ENCODE measurements at regions of chr11 and their contacts with region 1.

Region 1: GRCh38 chr11:7513234-7514098 is at the start of gene PPFIBP2:
- DNase-seq: peak; percentile 67 to 91 (median 82)
- ATAC-seq: peak; percentile 84
- H3K4me3 ChIP-seq: peak within 1 kb of the TSS; percentile 93 to 96
- H3K4me3 Mint-ChIP-seq: peak within 1 kb of the TSS; percentile 96
- H3K27ac ChIP-seq: peak within 1 kb of the TSS; percentile 84 to 97
- H3K27ac Mint-ChIP-seq: peak within 1 kb of the TSS; percentile 96
- H3K4me1 ChIP-seq: peaks cover 43% of the 10 kb centered on the region
- H3K4me1 Mint-ChIP-seq: peaks cover 57% of the 10 kb centered on the region
- H3K27me3 ChIP-seq: no peaks in the 10 kb centered on the region
- H3K27me3 Mint-ChIP-seq: no peaks in the 10 kb centered on the region
- CTCF ChIP-seq: peak; percentile 68
- total RNA-seq, gene PPFIBP2: 21.6 to 26.7 TPM

Region 2: GRCh38 chr11:6419009-6419631 is 1094.3 kb before region 1 on chr11 and contains the start of gene APBB1:
- CTCF ChIA-PET with region 1: no interaction called
- POLR2A ChIA-PET with region 1: no interaction called
- intact Hi-C with region 1: loop called in 1 of 2 experiments (anchors 10 kb)
- DNase-seq: peak; percentile 49 to 88 (median 77)
- ATAC-seq: peak; percentile 69
- H3K4me3 ChIP-seq: peak within 1 kb of the TSS; percentile 51 to 81
- H3K4me3 Mint-ChIP-seq: peak within 1 kb of the TSS; percentile 84
- H3K27ac ChIP-seq: peak within 1 kb of the TSS; percentile 48 to 82
- H3K27ac Mint-ChIP-seq: peak within 1 kb of the TSS; percentile 89
- H3K4me1 ChIP-seq: peaks cover 46% of the 10 kb centered on the region
- H3K4me1 Mint-ChIP-seq: peaks cover 10% of the 10 kb centered on the region
- H3K27me3 ChIP-seq: no peaks in the 10 kb centered on the region
- H3K27me3 Mint-ChIP-seq: peaks cover 3% of the 10 kb centered on the region
- CTCF ChIP-seq: no peak
- total RNA-seq, gene APBB1: 130 to 147 TPM

Region 3: GRCh38 chr11:7501894-7502293 is 11.6 kb before region 1 on chr11:
- CTCF ChIA-PET with region 1: interaction called, 15 read pairs
- POLR2A ChIA-PET with region 1: interaction called, 3 read pairs
- intact Hi-C with region 1: no loop called
- DNase-seq: no peak
- ATAC-seq: no peak
- H3K4me3 ChIP-seq: no peak overlapping the region
- H3K4me3 Mint-ChIP-seq: no peak overlapping the region
- H3K27ac ChIP-seq: no peak overlapping the region
- H3K27ac Mint-ChIP-seq: no peak overlapping the region
- H3K4me1 ChIP-seq: no peaks in the 10 kb centered on the region
- H3K4me1 Mint-ChIP-seq: no peaks in the 10 kb centered on the region
- H3K27me3 ChIP-seq: no peaks in the 10 kb centered on the region
- H3K27me3 Mint-ChIP-seq: peaks cover 2% of the 10 kb centered on the region
- CTCF ChIP-seq: no peak

Region 4: GRCh38 chr11:7657306-7658025 is 144.0 kb after region 1 on chr11:
- CTCF ChIA-PET with region 1: no interaction called
- POLR2A ChIA-PET with region 1: no interaction called
- intact Hi-C with region 1: loop called in 1 of 2 experiments (anchors 2 kb)
- DNase-seq: peak in 2 of 9 experiments; percentile 11 to 55
- ATAC-seq: no peak
- H3K4me3 ChIP-seq: no peak overlapping the region
- H3K4me3 Mint-ChIP-seq: no peak overlapping the region
- H3K27ac ChIP-seq: no peak overlapping the region
- H3K27ac Mint-ChIP-seq: no peak overlapping the region
- H3K4me1 ChIP-seq: no peaks in the 10 kb centered on the region
- H3K4me1 Mint-ChIP-seq: no peaks in the 10 kb centered on the region
- H3K27me3 ChIP-seq: no peaks in the 10 kb centered on the region
- H3K27me3 Mint-ChIP-seq: no peaks in the 10 kb centered on the region
- CTCF ChIP-seq: no peak

Region 5: GRCh38 chr11:7696424-7696823 is 183.0 kb after region 1 on chr11:
- CTCF ChIA-PET with region 1: interaction called, 13 read pairs
- POLR2A ChIA-PET with region 1: no interaction called
- intact Hi-C with region 1: loop called (anchors 1 to 2 kb)
- DNase-seq: no peak
- ATAC-seq: no peak
- H3K4me3 ChIP-seq: no peak overlapping the region
- H3K4me3 Mint-ChIP-seq: no peak overlapping the region
- H3K27ac ChIP-seq: no peak overlapping the region
- H3K27ac Mint-ChIP-seq: no peak overlapping the region
- H3K4me1 ChIP-seq: no peaks in the 10 kb centered on the region
- H3K4me1 Mint-ChIP-seq: no peaks in the 10 kb centered on the region
- H3K27me3 ChIP-seq: peaks cover 0 to 3% of the 10 kb centered on the region in 2 experiments
- H3K27me3 Mint-ChIP-seq: peaks cover 22% of the 10 kb centered on the region
- CTCF ChIP-seq: no peak

Region 6: GRCh38 chr11:8688414-8689362 is 1175.2 kb after region 1 on chr11:
- CTCF ChIA-PET with region 1: no interaction called
- POLR2A ChIA-PET with region 1: no interaction called
- intact Hi-C with region 1: loop called (anchors 2 to 10 kb)
- DNase-seq: peak; percentile 51 to 90 (median 80)
- ATAC-seq: peak; percentile 78
- H3K4me3 ChIP-seq: peak overlapping the region; percentile 78 to 79
- H3K4me3 Mint-ChIP-seq: peak overlapping the region; percentile 93
- H3K27ac ChIP-seq: peak overlapping the region; percentile 71 to 83
- H3K27ac Mint-ChIP-seq: peak overlapping the region; percentile 93
- H3K4me1 ChIP-seq: peaks cover 29% of the 10 kb centered on the region
- H3K4me1 Mint-ChIP-seq: peaks cover 41% of the 10 kb centered on the region
- H3K27me3 ChIP-seq: no peaks in the 10 kb centered on the region
- H3K27me3 Mint-ChIP-seq: no peaks in the 10 kb centered on the region
- CTCF ChIP-seq: no peak

Region 7: DNA sequence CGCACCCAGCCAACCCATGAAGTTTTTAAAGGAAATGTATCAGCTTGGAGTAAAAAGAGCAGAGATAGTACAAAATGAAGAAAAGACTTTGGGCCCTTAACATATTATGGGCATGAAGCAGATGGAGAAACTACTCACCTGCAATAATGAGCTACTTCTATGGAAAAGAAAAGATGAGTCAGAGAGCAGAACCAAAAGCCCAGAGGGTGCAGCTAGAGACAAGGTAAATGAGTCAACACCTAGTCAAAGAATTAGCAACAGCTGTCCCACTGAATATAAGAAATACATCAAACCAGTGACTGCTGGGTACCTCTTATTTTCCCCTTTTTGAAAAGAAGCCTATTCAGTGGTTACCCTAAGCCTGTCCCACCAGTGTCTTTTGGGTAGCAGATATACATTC is 1231.0 kb after region 1 on chr11:
- CTCF ChIA-PET with region 1: no interaction called
- POLR2A ChIA-PET with region 1: no interaction called
- intact Hi-C with region 1: no loop called
- DNase-seq: no peak
- ATAC-seq: no peak
- H3K4me3 ChIP-seq: no peak overlapping the region
- H3K4me3 Mint-ChIP-seq: no peak overlapping the region
- H3K27ac ChIP-seq: no peak overlapping the region
- H3K27ac Mint-ChIP-seq: no peak overlapping the region
- H3K4me1 ChIP-seq: no peaks in the 10 kb centered on the region
- H3K4me1 Mint-ChIP-seq: no peaks in the 10 kb centered on the region
- H3K27me3 ChIP-seq: no peaks in the 10 kb centered on the region
- H3K27me3 Mint-ChIP-seq: peaks cover 24% of the 10 kb centered on the region
- CTCF ChIP-seq: no peak